Activated CD4-positive, alpha-beta memory T cell treated with anti-CD3 and anti-CD28 coated beads, Interleukin-2, amount 10 ng/mL, durations not matched to agents 7 days and 5 days (primary cell): ENCODE measurements at regions of chr11 and their contacts with region 1.

Region 1: GRCh38 chr11:32176223-32176934 is 85.5 kb downstream of the RCN1 start:
- DNase-seq: peak; percentile 80
- H3K4me3 Mint-ChIP-seq: no peak overlapping the region
- H3K27ac Mint-ChIP-seq: no peak overlapping the region
- H3K4me1 Mint-ChIP-seq: peaks cover 1% of the 10 kb centered on the region
- H3K27me3 Mint-ChIP-seq: peaks cover 17% of the 10 kb centered on the region

Region 2: DNA sequence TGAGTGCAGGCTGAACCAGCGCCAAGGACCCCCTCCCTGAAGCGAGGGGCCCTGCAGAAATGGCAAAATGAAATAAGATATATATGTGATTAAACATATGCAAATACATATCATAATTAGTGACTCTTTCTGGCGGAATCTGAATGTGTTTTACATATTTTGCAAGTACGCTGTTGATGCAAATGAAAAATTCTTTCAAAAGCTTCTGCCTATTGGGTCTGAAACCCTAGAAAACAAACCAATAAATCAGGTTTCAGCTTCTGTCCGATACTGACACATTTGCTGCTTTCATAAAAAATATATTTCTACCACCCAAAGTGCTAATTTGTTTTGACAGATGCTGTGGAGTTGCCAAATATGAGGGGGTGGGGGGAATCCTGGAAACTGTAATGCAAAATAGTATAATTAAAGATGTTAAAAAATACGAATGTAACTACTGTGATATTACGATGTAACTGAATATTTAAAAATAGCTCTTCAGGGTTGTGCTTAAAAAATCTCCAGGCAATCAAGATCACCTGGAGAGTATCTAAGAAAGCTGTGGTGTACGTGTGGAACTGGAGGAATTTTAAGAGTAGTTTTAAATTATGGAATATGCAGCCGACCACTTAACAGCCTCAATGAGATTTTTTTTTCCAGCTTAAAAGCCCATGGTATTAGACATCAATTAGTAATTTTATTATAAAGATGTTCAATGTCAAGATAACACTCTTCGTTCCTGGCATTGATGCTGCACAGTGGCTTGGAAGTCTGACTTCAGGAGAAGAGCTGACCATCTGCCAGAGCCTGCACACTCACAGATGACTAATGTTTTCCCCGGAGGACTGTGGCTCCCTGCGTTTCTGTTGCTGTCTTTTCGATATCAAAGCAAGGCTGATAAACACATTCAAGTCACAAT is 207.7 kb before region 1 on chr11:
- CTCF ChIA-PET with region 1: no interaction called
- POLR2A ChIA-PET with region 1: no interaction called
- DNase-seq: no peak
- H3K4me3 Mint-ChIP-seq: no peak overlapping the region
- H3K27ac Mint-ChIP-seq: no peak overlapping the region
- H3K4me1 Mint-ChIP-seq: no peaks in the 10 kb centered on the region
- H3K27me3 Mint-ChIP-seq: no peaks in the 10 kb centered on the region

Region 3: GRCh38 chr11:31995525-31996094 is 180.8 kb before region 1 on chr11:
- CTCF ChIA-PET with region 1: no interaction called
- POLR2A ChIA-PET with region 1: no interaction called
- DNase-seq: peak; percentile 26
- H3K4me3 Mint-ChIP-seq: peak overlapping the region; percentile 55
- H3K27ac Mint-ChIP-seq: peak overlapping the region; percentile 27
- H3K4me1 Mint-ChIP-seq: peaks cover 18% of the 10 kb centered on the region
- H3K27me3 Mint-ChIP-seq: no peaks in the 10 kb centered on the region

Region 4: DNA sequence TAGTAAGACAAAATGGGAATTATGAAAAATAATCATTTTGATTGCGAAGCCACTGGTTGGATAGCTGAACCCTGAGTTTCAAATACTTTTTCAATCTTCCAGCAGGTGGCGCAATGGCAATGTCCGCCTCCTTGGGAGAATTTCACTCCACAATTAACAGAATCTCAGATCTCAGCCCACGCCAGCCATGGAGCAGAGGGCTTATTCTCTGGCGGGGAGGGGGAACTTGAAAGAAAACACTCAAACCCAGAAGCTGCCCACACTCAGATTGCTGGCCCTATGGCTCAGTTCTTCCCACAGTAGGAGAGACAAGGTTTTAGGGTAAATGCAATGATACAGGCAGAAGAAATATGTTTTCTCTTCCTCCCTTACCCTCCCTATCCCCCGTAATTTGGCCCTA is 124.2 kb before region 1 on chr11:
- CTCF ChIA-PET with region 1: interaction called, 74 read pairs
- POLR2A ChIA-PET with region 1: no interaction called
- DNase-seq: peak; percentile 49
- H3K4me3 Mint-ChIP-seq: no peak overlapping the region
- H3K27ac Mint-ChIP-seq: no peak overlapping the region
- H3K4me1 Mint-ChIP-seq: no peaks in the 10 kb centered on the region
- H3K27me3 Mint-ChIP-seq: peaks cover 29% of the 10 kb centered on the region

Region 5: GRCh38 chr11:32162351-32162750 is 14.0 kb before region 1 on chr11:
- CTCF ChIA-PET with region 1: interaction called, 11 read pairs
- POLR2A ChIA-PET with region 1: no interaction called
- DNase-seq: no peak
- H3K4me3 Mint-ChIP-seq: no peak overlapping the region
- H3K27ac Mint-ChIP-seq: no peak overlapping the region
- H3K4me1 Mint-ChIP-seq: no peaks in the 10 kb centered on the region
- H3K27me3 Mint-ChIP-seq: peaks cover 24% of the 10 kb centered on the region